ENCODE measurements at regions of chr3 and their contacts with region 1.

Region 1: GRCh38 chr3:134357261-134358184 is 16.7 kb downstream of the AMOTL2 start:
- DNase-seq: peak; percentile 91 to 98
- H3K4me3 ChIP-seq: peak overlapping the region; percentile 20; the same call in 1 of the 2 replicates
- H3K27ac ChIP-seq: peak overlapping the region; percentile 100
- H3K4me1 ChIP-seq: peaks cover 99% of the 10 kb centered on the region
- H3K27me3 ChIP-seq: no peaks in the 10 kb centered on the region
- CTCF ChIP-seq: no peak

Region 2: DNA sequence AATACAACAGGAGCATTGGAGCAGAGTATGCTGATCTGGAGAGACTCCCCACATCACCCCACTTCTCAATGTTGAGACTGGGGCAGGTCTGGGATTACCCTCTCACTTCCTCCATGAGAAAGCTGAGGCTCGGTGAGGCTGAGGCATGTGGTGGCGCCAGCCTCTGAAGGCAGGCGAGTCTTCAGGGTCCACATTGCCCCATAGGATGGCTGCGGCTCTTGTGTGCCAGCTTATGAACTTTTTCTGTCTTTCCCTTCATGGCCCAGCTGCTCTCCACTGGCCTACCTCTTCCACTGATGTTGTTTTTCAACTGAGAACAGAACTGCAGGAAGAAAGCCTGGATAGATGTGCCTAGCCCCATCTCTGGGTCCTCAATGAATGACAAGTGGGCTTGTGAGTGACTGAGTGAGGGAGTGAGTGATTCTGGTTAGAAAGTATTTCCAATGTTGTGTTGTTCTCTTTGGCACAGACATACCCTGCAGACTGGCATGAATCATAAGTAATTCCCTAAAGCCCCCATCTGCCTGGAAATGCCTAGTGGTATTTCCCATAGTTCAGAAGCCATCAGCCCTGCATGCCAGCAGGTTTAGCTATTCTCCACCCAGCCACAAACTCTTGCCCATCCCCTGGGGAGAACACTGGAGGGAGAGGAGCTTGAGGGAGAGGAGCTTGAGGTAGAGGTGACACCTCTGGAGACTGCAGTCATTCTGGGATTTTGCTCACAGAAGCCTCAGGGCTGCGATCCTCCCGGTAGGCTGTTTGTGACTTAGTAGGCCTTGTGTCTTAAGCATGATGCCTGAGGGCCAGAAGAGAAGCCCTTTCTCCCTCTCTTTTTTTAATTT is 40.2 kb before region 1 on chr3:
- CTCF ChIA-PET with region 1: interaction called, 3 read pairs
- POLR2A ChIA-PET with region 1: interaction called, 18 read pairs
- intact Hi-C with region 1: loop called (anchors 1 kb)
- DNase-seq: peak; percentile 90 to 93
- H3K4me3 ChIP-seq: no peak overlapping the region
- H3K27ac ChIP-seq: peak overlapping the region; percentile 98
- H3K4me1 ChIP-seq: peaks cover 80% of the 10 kb centered on the region
- H3K27me3 ChIP-seq: no peaks in the 10 kb centered on the region
- CTCF ChIP-seq: no peak

Region 3: GRCh38 chr3:134449277-134449676 is 91.8 kb after region 1 on chr3:
- CTCF ChIA-PET with region 1: no interaction called
- POLR2A ChIA-PET with region 1: no interaction called
- intact Hi-C with region 1: loop called (anchors 1 kb)
- DNase-seq: peak in 1 of 2 experiments; percentile 27
- H3K4me3 ChIP-seq: no peak overlapping the region
- H3K27ac ChIP-seq: no peak overlapping the region
- H3K4me1 ChIP-seq: peaks cover 18% of the 10 kb centered on the region
- H3K27me3 ChIP-seq: no peaks in the 10 kb centered on the region
- CTCF ChIP-seq: peak; percentile 49

Measured in PC-9 (cell line).